K562 (cell line): ENCODE measurements at regions of chr15 and their contacts with region 1.

Region 1: DNA sequence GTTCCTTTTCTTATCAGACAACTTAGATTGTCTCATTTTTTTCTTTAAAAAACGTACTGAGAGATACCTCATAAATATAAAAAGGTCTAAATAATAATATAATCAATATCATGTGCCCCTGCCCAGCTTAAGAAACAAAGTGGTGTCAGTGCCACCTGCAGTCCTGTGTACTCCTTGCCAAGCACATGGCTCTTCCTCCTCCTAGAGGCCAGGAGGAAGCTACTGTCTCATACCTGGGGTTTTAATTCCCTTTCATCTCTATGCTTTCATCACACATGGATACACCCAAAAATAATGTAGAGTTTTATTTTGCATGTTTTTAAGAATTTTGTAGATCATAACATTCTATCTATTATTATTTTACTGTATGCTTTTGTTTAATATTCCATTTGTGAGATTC is 98.6 kb upstream of the C15orf61 start:
- DNase-seq: no peak
- ATAC-seq: no peak
- H3K4me3 ChIP-seq: no peak overlapping the region
- H3K27ac ChIP-seq: no peak overlapping the region
- H3K4me1 ChIP-seq: no peaks in the 10 kb centered on the region
- H3K27me3 ChIP-seq: no peaks in the 10 kb centered on the region
- CTCF ChIP-seq: peak in 2 of 3 experiments; percentile 31 to 53; a peak in 3 of 6 replicates
- EP300 ChIP-seq: no peak
- POLR2A ChIP-seq: no peak
- RAD21 ChIP-seq: peak in 1 of 2 experiments; percentile 38; a peak in 1 of 4 replicates

Region 2: GRCh38 chr15:66946578-66947164 is 475.6 kb before region 1 on chr15:
- CTCF ChIA-PET with region 1: no interaction called
- POLR2A ChIA-PET with region 1: no interaction called
- in situ Hi-C with region 1: loop called (anchors 10 kb)
- intact Hi-C with region 1: no loop called
- DNase-seq: peak; percentile 77 to 85 (median 81)
- ATAC-seq: peak; percentile 89
- H3K4me3 ChIP-seq: no peak overlapping the region
- H3K27ac ChIP-seq: no peak overlapping the region
- H3K4me1 ChIP-seq: peaks cover 0 to 9% of the 10 kb centered on the region in 2 experiments; a peak in 1 of 5 replicates
- H3K27me3 ChIP-seq: peaks cover 0 to 9% of the 10 kb centered on the region in 2 experiments; a peak in 1 of 5 replicates
- CTCF ChIP-seq: peak; percentile 89 to 95 (median 93)
- EP300 ChIP-seq: no peak
- POLR2A ChIP-seq: no peak
- RAD21 ChIP-seq: peak; percentile 94 to 98

Region 3: GRCh38 chr15:67433495-67434099 is 11.3 kb after region 1 on chr15:
- CTCF ChIA-PET with region 1: no interaction called
- POLR2A ChIA-PET with region 1: no interaction called
- in situ Hi-C with region 1: no loop called
- intact Hi-C with region 1: no loop called
- DNase-seq: peak; percentile 60 to 71 (median 67)
- ATAC-seq: peak; percentile 91
- H3K4me3 ChIP-seq: no peak overlapping the region
- H3K27ac ChIP-seq: no peak overlapping the region
- H3K4me1 ChIP-seq: peaks cover 0 to 5% of the 10 kb centered on the region in 2 experiments; a peak in 2 of 5 replicates
- H3K27me3 ChIP-seq: no peaks in the 10 kb centered on the region
- CTCF ChIP-seq: peak; percentile 81 to 86 (median 82)
- EP300 ChIP-seq: no peak
- POLR2A ChIP-seq: no peak
- RAD21 ChIP-seq: peak; percentile 79 to 88